Right ventricle myocardium inferior (tissue), 1 donor: ENCODE measurements at regions of chrX and their contacts with region 1.

Region 1: GRCh38 chrX:67543818-67544217 is at the start of gene AR:
- DNase-seq: peak; percentile 79
- ATAC-seq: peak; percentile 91
- total RNA-seq, gene AR: 23.9 TPM

Region 2: GRCh38 chrX:67114635-67115034 is 429.2 kb before region 1 on chrX:
- intact Hi-C with region 1: no loop called
- DNase-seq: no peak
- ATAC-seq: no peak

Region 3: GRCh38 chrX:67296395-67296794 is 247.4 kb before region 1 on chrX:
- intact Hi-C with region 1: loop called (anchors 10 kb)
- DNase-seq: no peak
- ATAC-seq: peak; percentile 62

Region 4: DNA sequence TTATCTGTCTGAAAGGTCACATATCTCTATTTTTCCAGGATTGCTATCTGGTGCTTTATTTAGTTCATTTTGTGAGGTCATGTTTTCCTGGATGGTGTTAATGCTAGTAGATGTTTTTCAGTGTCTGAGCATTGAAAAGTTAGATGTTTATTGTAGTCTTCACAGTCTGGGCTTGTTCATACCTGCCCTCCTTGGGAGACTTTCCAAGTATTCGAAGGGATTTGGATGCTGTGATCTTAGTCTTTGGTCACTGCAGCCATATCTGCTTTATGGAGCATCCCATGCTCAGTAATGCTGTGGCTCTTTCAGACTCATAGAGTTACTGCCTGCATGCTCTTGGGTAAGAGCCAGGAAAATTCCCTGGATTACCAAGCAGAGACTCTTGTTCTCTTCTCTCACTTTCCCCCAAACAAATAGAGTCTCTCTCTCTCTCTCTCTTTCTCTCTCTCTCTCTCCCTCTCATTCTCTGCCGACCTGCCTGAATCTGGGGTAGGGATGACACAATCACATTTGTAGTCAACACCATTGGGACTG is 130.0 kb after region 1 on chrX:
- intact Hi-C with region 1: no loop called
- DNase-seq: no peak
- ATAC-seq: no peak

Region 5: DNA sequence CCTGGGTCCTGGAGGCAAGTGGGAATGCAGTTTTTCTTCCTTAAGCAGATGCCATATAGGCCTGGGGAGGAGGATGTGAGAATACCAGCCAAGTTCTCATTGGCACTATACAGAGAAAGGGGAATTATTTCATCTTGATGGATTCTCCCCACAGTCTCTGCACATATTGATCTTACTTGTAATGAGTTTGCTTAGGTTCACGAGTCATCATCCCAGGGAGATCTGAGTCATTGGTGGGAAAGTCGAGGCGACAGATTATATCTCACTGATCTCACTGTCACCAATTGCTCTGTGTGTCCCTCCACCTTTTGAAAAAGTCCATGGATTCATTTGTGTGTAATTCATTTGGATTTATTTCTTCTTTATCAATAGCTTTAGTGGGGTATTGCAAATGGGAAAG is 156.8 kb after region 1 on chrX:
- intact Hi-C with region 1: no loop called
- DNase-seq: no peak
- ATAC-seq: no peak

Region 6: GRCh38 chrX:67718926-67719325 is 175.1 kb after region 1 on chrX:
- intact Hi-C with region 1: loop called (anchors 5 kb)
- DNase-seq: no peak
- ATAC-seq: peak; percentile 89

Region 7: GRCh38 chrX:67780694-67781109 is 236.9 kb after region 1 on chrX:
- intact Hi-C with region 1: loop called (anchors 10 kb)
- DNase-seq: peak; percentile 75
- ATAC-seq: peak; percentile 85